RWPE1 (cell line): ENCODE measurements at regions of chr11 and their contacts with region 1.

Region 1: GRCh38 chr11:1546536-1547400 is 25.3 kb downstream of the DUSP8 start:
- DNase-seq: peak; percentile 77
- H3K27ac ChIP-seq: no peak overlapping the region
- CTCF ChIP-seq: peak; percentile 83

Region 2: GRCh38 chr11:1559119-1559951 is 12.6 kb after region 1 on chr11:
- CTCF ChIA-PET with region 1: interaction called, 21 read pairs
- POLR2A ChIA-PET with region 1: no interaction called
- DNase-seq: peak; percentile 91
- H3K27ac ChIP-seq: peak overlapping the region; percentile 99
- CTCF ChIP-seq: no peak